Stomach (tissue), 19 donors: ENCODE measurements at regions of chr13 and their contacts with region 1.

Region 1: DNA sequence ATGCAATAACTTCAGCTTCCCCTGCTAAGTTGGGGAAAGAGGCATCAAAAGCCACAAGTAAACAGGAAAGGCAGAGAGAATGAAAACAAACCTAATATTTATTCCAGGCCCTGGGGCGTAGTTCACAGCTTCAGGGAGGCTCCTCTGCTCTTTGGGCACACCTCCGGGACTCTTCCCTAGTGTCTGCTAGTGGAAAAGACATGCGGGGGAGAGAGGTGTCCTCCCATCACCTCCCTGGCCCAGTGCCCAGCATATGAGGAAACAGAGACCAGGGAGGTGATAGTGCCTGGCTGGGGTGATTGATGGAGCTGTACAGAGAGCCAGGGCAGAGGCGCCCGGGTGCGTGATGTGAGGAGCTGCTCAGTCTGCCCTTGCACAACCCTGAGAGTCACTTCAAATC is 71.0 kb downstream of the RASL11A start:
- DNase-seq: peak in 1 of 2 donors; percentile 18
- H3K4me3 ChIP-seq: no peak overlapping the region
- H3K27ac ChIP-seq: no peak overlapping the region
- H3K4me1 ChIP-seq: peaks cover 0 to 6% (median 0%) of the 10 kb centered on the region in 4 donors
- H3K27me3 ChIP-seq: peaks cover 0 to 11% (median 0%) of the 10 kb centered on the region in 3 donors
- CTCF ChIP-seq: no peak
- EP300 ChIP-seq: no peak
- POLR2A ChIP-seq: no peak

Region 2: DNA sequence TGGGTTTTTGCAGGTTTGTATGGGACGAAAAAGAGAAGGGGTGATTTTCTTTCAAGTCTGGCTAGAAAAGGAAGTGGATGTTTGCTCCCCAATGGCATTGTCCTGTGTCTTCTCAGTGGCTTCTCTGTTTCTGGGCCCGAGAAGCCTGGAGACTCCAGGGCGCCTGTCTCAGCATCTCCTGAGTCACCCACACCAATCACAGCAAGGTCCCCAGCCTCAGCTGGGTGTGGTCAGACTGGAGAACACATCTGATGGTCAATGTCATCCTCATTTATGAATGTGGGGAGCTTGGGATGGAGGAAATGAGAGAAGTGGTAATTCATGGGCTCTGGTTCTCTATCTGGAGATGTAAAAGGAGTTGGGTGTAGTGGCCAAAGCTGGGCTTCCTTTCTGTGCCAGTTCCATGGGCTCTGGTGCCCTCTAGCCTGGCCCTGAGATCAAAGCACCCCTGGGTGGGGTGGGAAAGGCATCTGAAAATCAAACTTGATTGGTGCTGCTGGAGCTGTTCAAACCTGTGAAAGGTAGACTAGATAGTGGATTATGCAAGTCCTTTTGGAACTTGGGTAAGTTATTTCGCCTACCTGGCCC is 57.6 kb before region 1 on chr13:
- intact Hi-C with region 1: loop called (anchors 10 kb)
- DNase-seq: peak in 1 of 2 donors; percentile 45
- H3K4me3 ChIP-seq: no peak overlapping the region
- H3K27ac ChIP-seq: no peak overlapping the region
- H3K4me1 ChIP-seq: no peaks in the 10 kb centered on the region
- H3K27me3 ChIP-seq: peaks cover 0 to 6% (median 0%) of the 10 kb centered on the region in 3 donors
- CTCF ChIP-seq: peak in 3 of 7 experiments; percentile 19 to 25 (median 22)
- EP300 ChIP-seq: no peak
- POLR2A ChIP-seq: no peak